ENCODE measurements at regions of chr6 and their contacts with region 1.

Region 1: GRCh38 chr6:130885392-130886192 is 58.4 kb downstream of the SMLR1 start:
- DNase-seq: peak; percentile 72 to 79 (median 77)
- H3K4me3 ChIP-seq: no peak overlapping the region
- H3K4me3 Mint-ChIP-seq: no peak overlapping the region
- H3K27ac ChIP-seq: no peak overlapping the region
- H3K27ac Mint-ChIP-seq: no peak overlapping the region
- H3K4me1 ChIP-seq: no peaks in the 10 kb centered on the region
- H3K4me1 Mint-ChIP-seq: no peaks in the 10 kb centered on the region
- H3K27me3 ChIP-seq: no peaks in the 10 kb centered on the region
- H3K27me3 Mint-ChIP-seq: no peaks in the 10 kb centered on the region

Region 2: DNA sequence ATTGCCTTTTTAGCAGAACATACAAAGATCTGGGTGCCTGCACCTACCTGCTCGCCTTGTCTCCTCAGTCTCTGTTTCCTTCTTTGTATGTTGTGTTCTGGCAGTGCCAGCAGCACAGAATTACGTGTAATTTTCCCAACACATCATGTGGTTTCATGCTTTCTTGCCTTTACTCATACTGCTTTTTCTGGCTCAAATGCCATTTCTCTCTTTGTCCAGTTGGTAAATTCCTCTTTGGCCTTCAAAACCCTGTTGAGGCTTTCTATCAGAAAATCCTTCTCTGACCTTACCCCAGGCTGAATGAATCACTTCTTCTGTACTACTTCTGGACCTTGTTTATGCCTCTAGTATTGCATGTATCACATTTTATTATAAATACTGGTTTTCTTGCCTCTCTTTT is 835.4 kb before region 1 on chr6:
- CTCF ChIA-PET with region 1: no interaction called
- POLR2A ChIA-PET with region 1: no interaction called
- intact Hi-C with region 1: no loop called
- DNase-seq: no peak
- H3K4me3 ChIP-seq: no peak overlapping the region
- H3K4me3 Mint-ChIP-seq: no peak overlapping the region
- H3K27ac ChIP-seq: no peak overlapping the region
- H3K27ac Mint-ChIP-seq: peak overlapping the region in 2 of 7 donors; percentile 1 to 43
- H3K4me1 ChIP-seq: no peaks in the 10 kb centered on the region
- H3K4me1 Mint-ChIP-seq: peaks cover 13 to 18% (median 16%) of the 10 kb centered on the region in 4 donors
- H3K27me3 ChIP-seq: no peaks in the 10 kb centered on the region
- H3K27me3 Mint-ChIP-seq: no peaks in the 10 kb centered on the region

Region 3: DNA sequence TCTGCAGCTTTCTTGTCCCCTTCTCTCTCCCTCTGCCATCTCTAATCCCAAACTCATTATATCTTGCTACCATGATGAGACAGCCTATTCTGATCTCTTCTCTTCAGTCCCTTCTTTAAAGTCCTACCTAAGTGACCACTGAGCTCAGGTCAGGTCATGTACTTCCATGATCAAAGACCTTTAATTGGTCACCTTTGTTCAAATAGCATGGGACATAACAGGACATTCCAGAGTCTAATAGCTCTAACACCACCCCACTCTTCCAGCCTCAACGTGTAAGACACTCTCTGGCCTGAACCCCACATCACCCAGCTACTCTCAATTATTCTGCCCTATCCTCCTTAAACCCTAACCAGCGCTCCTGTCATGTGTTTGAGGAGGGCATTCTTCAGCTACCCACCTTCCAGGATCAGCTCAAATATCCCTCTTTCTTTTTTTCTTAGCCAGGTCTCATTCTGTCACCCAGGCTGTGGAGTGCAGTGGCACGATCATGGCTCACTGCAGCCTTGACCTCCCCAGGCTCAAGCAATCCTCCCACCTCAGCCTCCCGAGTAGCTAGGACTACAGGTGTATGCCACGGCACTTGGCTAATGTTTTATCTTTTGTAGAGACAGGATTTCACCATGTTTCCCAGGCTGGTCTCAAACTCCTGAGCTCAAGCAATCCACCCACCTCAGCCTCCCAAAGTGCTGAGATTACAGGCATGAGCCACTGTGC is 60.5 kb before region 1 on chr6:
- CTCF ChIA-PET with region 1: no interaction called
- POLR2A ChIA-PET with region 1: no interaction called
- intact Hi-C with region 1: no loop called
- DNase-seq: no peak
- H3K4me3 ChIP-seq: no peak overlapping the region
- H3K4me3 Mint-ChIP-seq: no peak overlapping the region
- H3K27ac ChIP-seq: no peak overlapping the region
- H3K27ac Mint-ChIP-seq: no peak overlapping the region
- H3K4me1 ChIP-seq: no peaks in the 10 kb centered on the region
- H3K4me1 Mint-ChIP-seq: peaks cover 0 to 4% (median 2%) of the 10 kb centered on the region in 4 donors
- H3K27me3 ChIP-seq: no peaks in the 10 kb centered on the region
- H3K27me3 Mint-ChIP-seq: no peaks in the 10 kb centered on the region

Region 4: DNA sequence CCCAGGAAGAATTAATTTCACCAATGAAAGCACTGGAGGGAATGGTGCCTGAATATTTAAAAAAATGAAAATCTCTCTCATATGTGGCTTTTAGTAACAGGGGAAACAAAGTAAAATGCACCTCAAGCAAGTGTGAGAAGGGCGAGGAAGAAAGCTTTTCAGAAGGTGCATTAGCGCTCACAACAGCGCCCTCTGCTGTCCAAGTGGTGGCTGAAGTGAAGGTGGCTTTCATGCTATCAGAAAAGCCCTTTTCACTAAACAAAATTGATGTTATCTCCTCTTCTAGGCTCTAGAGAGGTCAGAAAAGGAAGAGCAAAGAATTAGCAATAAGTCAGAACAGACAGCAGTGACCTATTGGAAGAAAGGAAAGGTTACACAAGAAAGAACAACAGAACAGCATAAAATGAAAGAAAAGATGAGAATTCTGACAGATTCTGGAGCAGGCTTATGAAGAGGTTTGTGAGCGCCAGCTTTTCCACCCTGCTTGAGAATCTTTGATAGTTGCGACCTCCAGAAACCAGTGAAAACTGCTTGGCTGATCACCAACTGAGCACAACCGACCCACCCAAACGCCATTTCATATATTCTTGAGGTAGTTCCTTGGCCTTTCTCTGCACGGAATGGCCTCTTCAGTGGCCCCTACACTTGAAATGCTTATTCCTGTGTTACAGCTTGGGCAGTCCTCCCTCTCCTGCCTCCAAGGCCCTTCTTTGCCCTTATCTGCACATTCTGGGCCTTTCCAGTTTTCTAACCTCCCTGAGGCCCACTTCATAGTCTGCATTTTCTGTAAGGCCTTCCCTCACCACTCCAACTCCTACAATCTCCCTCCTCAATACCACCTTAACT is 13.1 kb before region 1 on chr6:
- CTCF ChIA-PET with region 1: interaction called, 12 read pairs
- POLR2A ChIA-PET with region 1: interaction called, 3 read pairs
- intact Hi-C with region 1: no loop called
- DNase-seq: peak; percentile 43 to 59 (median 58)
- H3K4me3 ChIP-seq: no peak overlapping the region
- H3K4me3 Mint-ChIP-seq: no peak overlapping the region
- H3K27ac ChIP-seq: no peak overlapping the region
- H3K27ac Mint-ChIP-seq: peak overlapping the region in 1 of 7 donors; percentile 76
- H3K4me1 ChIP-seq: no peaks in the 10 kb centered on the region
- H3K4me1 Mint-ChIP-seq: peaks cover 0 to 7% (median 3%) of the 10 kb centered on the region in 4 donors
- H3K27me3 ChIP-seq: no peaks in the 10 kb centered on the region
- H3K27me3 Mint-ChIP-seq: peaks cover 0 to 1% of the 10 kb centered on the region in 2 donors

Region 5: DNA sequence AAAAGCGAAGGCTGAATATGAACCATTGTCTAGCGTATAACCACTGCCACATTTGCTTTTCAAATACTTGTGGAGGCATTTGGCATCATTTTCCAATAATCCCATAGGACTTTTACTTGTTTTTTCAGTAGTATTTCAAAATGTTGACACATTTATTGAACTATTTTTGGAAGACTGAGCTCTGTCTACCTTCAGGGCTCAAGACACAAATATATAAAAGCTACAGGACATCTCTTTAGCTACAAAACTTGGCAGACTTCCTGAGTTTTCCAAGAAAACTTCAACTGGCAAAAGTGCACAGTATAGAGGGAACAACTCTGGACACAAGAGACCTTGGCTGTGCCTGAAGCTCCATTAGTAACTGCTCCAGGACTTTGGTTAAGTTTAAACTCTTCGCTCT is 164.0 kb after region 1 on chr6:
- CTCF ChIA-PET with region 1: no interaction called
- POLR2A ChIA-PET with region 1: no interaction called
- intact Hi-C with region 1: no loop called
- DNase-seq: no peak
- H3K4me3 ChIP-seq: no peak overlapping the region
- H3K4me3 Mint-ChIP-seq: no peak overlapping the region
- H3K27ac ChIP-seq: no peak overlapping the region
- H3K27ac Mint-ChIP-seq: no peak overlapping the region
- H3K4me1 ChIP-seq: no peaks in the 10 kb centered on the region
- H3K4me1 Mint-ChIP-seq: peaks cover 0 to 2% (median 0%) of the 10 kb centered on the region in 4 donors
- H3K27me3 ChIP-seq: no peaks in the 10 kb centered on the region
- H3K27me3 Mint-ChIP-seq: peaks cover 0 to 2% of the 10 kb centered on the region in 2 donors

Region 6: GRCh38 chr6:131116749-131117360 is 231.3 kb after region 1 on chr6:
- CTCF ChIA-PET with region 1: interaction called, 213 read pairs
- POLR2A ChIA-PET with region 1: interaction called, 5 read pairs
- intact Hi-C with region 1: loop called (anchors 1 kb)
- DNase-seq: peak in 4 of 5 donors; percentile 37 to 51 (median 48)
- H3K4me3 ChIP-seq: no peak overlapping the region
- H3K4me3 Mint-ChIP-seq: no peak overlapping the region
- H3K27ac ChIP-seq: no peak overlapping the region
- H3K27ac Mint-ChIP-seq: no peak overlapping the region
- H3K4me1 ChIP-seq: no peaks in the 10 kb centered on the region
- H3K4me1 Mint-ChIP-seq: no peaks in the 10 kb centered on the region
- H3K27me3 ChIP-seq: no peaks in the 10 kb centered on the region
- H3K27me3 Mint-ChIP-seq: peaks cover 0 to 2% of the 10 kb centered on the region in 2 donors

Region 7: DNA sequence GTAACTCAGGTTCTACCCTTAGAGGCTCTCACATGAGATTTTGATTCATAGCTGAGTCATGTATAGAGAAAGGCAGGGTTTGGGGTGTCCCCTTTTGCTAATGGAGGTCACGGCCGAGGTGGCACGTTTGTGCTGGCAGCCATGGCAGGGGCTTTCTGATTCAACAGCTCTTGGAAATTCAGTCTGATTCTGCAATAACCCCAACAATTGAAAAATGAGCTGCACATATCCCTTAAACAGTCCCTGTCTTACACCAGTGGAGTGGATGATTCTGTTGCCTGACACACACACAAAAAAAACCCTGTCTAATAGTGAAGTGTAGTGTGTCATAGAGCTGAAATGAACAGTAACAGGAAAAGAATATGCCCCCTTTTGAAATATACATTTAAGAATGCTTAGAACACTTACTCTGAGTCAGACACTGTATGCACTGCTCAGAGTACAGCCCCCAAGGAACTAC is 647.0 kb after region 1 on chr6:
- CTCF ChIA-PET with region 1: interaction called, 79 read pairs
- POLR2A ChIA-PET with region 1: interaction called, 4 read pairs
- intact Hi-C with region 1: loop called (anchors 1 kb)
- DNase-seq: no peak
- H3K4me3 ChIP-seq: no peak overlapping the region
- H3K4me3 Mint-ChIP-seq: peak overlapping the region in 4 of 8 donors; percentile 2 to 52 (median 39)
- H3K27ac ChIP-seq: no peak overlapping the region
- H3K27ac Mint-ChIP-seq: peak overlapping the region in 5 of 7 donors; percentile 7 to 74 (median 55)
- H3K4me1 ChIP-seq: peaks cover 19% of the 10 kb centered on the region
- H3K4me1 Mint-ChIP-seq: peaks cover 31 to 55% (median 44%) of the 10 kb centered on the region in 4 donors
- H3K27me3 ChIP-seq: no peaks in the 10 kb centered on the region
- H3K27me3 Mint-ChIP-seq: peaks cover 0 to 5% of the 10 kb centered on the region in 2 donors

Region 8: GRCh38 chr6:131909408-131910218 is 1024.0 kb after region 1 on chr6:
- CTCF ChIA-PET with region 1: interaction called, 8 read pairs
- POLR2A ChIA-PET with region 1: no interaction called
- intact Hi-C with region 1: loop called (anchors 1 kb)
- DNase-seq: peak; percentile 68 to 75 (median 73)
- H3K4me3 ChIP-seq: no peak overlapping the region
- H3K4me3 Mint-ChIP-seq: peak overlapping the region in 6 of 8 donors; percentile 21 to 79 (median 42)
- H3K27ac ChIP-seq: no peak overlapping the region
- H3K27ac Mint-ChIP-seq: peak overlapping the region in 5 of 7 donors; percentile 31 to 85 (median 74)
- H3K4me1 ChIP-seq: peaks cover 17% of the 10 kb centered on the region
- H3K4me1 Mint-ChIP-seq: peaks cover 11 to 26% (median 15%) of the 10 kb centered on the region in 4 donors
- H3K27me3 ChIP-seq: no peaks in the 10 kb centered on the region
- H3K27me3 Mint-ChIP-seq: peaks cover 10 to 16% of the 10 kb centered on the region in 2 donors

Region 9: GRCh38 chr6:132483779-132484679 is 1598.4 kb after region 1 on chr6:
- CTCF ChIA-PET with region 1: no interaction called
- POLR2A ChIA-PET with region 1: no interaction called
- intact Hi-C with region 1: loop called (anchors 5 kb)
- DNase-seq: peak; percentile 56 to 67 (median 61)
- H3K4me3 ChIP-seq: no peak overlapping the region
- H3K4me3 Mint-ChIP-seq: no peak overlapping the region
- H3K27ac ChIP-seq: no peak overlapping the region
- H3K27ac Mint-ChIP-seq: peak overlapping the region in 2 of 7 donors; percentile 17 to 30
- H3K4me1 ChIP-seq: peaks cover 6% of the 10 kb centered on the region
- H3K4me1 Mint-ChIP-seq: peaks cover 14 to 21% (median 20%) of the 10 kb centered on the region in 4 donors
- H3K27me3 ChIP-seq: no peaks in the 10 kb centered on the region
- H3K27me3 Mint-ChIP-seq: no peaks in the 10 kb centered on the region